Colonic mucosa (tissue), 4 donors: ENCODE measurements at regions of chr4 and their contacts with region 1.

Region 1: DNA sequence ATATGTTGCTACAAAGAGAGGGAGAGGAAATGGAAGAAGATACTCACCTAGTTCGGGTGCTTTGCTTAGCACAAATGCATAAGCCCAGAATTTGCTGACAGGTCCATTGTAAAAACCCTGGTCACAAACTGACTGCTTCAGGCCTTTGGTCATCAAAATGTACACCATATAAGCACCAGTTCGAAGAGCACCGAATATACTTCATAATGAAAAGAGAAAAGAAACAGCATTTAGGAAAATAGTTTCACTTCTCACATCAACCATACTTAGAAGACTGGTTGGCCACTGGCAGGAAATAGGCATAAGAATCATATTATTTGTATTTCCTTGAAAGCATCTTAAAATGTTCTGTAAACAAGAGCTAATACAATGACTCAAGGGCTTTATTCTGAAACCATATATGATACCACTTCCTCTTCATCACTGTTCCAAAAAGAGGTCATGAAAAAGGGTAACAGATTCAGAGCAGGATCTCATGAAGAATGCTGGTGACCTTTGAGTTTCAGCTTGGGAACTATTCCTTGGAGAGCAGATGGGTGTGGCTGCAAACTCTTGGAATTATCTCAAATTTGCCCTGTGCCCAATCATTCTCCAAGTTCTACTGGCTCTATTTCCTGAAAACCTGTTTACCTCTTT is 138.7 kb downstream of the ELOVL6 start:
- DNase-seq: peak; percentile 59
- H3K4me3 ChIP-seq: no peak overlapping the region
- H3K27ac ChIP-seq: peak overlapping the region; percentile 49
- H3K4me1 ChIP-seq: no peaks in the 10 kb centered on the region
- H3K27me3 ChIP-seq: no peaks in the 10 kb centered on the region
- CTCF ChIP-seq: no peak

Region 2: DNA sequence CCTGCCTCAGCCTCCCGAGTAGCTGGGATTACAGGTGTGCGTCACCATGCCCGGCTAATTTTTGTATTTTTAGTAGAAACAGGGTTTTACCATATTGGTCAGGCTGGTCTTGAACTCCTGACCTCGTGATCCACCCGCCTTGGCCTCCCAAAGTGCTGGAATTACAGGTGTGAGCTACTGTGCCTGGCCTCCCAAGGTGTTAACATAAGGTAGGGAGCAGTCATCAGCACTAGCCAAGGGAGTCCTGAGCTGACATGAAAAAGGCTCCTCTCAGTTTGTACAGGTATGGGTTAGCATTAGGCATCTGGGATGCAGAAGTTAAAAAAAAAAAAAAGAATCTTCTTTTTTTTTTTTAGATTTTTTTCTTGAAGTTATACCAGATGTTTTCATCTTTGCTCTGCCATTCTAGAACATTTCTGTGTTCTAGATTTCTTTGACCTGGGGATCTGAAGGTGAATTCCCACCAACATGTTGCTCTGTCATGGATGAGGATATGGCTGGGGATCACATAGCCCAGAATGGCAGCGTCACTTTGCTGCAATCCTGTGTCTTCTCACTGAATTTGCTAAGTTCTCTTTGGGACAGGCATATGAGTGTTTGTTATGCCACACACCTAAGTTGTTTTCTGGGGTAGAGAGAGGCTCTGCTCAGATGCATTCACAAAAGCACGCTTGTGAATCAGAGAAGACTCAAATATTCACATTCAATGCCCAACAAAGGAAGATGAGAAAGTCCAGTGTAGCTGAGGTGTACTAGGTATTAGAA is 305.4 kb before region 1 on chr4:
- intact Hi-C with region 1: no loop called
- DNase-seq: no peak
- H3K4me3 ChIP-seq: no peak overlapping the region
- H3K27ac ChIP-seq: no peak overlapping the region
- H3K4me1 ChIP-seq: no peaks in the 10 kb centered on the region
- H3K27me3 ChIP-seq: no peaks in the 10 kb centered on the region
- CTCF ChIP-seq: no peak

Region 3: DNA sequence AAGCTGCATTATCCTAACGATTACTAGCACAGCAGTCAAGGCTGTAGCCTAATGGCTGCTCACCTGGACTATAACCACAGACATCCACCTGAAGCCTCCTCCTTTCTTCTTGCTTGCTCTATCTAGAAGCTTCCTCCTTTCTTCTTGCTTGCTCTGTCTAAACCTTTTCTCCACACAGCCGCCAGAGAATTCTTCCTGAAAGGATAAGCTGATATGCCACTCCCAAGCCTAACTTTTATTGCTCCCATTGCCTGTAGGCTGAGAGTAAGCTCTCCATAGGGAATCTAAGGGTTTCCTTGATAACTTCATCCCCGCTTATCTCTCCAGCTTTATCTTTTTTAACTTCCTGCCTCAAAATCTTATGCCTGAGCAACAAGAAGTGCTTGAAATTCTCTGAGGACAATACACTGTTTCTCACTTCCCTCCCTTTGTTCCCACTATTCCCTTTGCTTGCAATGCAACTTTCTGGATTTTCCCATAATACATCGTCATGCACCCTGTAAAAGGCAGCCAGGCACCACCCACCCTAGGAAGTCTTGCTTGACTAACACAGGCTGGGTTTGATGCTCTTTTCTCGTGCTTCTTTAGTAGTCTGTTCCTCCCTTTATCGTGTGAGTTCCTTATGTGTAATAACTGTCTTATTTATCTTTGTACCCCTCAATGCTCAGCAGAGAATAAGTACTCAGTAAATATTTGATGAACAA is 213.1 kb before region 1 on chr4:
- intact Hi-C with region 1: no loop called
- DNase-seq: peak; percentile 48
- H3K4me3 ChIP-seq: no peak overlapping the region
- H3K27ac ChIP-seq: no peak overlapping the region
- H3K4me1 ChIP-seq: no peaks in the 10 kb centered on the region
- H3K27me3 ChIP-seq: no peaks in the 10 kb centered on the region
- CTCF ChIP-seq: no peak

Region 4: DNA sequence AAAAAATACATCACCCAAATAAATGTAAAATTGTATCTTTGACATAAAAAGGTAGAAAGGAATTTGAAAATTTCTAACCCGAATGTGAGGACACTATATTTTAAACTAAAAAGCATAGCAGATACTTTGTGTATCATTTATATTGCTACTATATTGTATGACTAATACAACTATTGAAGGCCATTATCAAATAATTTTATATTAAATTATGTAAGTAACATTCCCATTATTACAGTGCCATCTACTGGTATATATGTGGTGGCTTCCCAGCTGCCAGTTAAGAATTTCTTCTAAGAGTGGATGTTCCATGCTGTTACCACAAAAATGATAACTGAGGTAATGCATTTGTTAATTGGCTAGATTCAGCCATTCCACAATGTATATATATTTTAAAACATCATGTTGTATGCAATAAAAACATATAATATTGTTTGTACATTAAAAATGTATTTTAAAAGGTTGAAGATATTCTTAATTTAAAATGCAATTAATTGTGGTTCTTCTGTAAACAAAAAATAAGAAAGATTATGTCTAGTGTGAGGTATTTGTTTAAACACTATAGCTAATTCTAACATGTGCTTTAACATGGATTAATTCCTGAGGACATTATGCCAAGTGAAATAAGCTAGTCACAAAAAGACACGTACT is 81.7 kb before region 1 on chr4:
- intact Hi-C with region 1: no loop called
- DNase-seq: no peak
- H3K4me3 ChIP-seq: no peak overlapping the region
- H3K27ac ChIP-seq: no peak overlapping the region
- H3K4me1 ChIP-seq: no peaks in the 10 kb centered on the region
- H3K27me3 ChIP-seq: no peaks in the 10 kb centered on the region
- CTCF ChIP-seq: peak; percentile 56

Region 5: DNA sequence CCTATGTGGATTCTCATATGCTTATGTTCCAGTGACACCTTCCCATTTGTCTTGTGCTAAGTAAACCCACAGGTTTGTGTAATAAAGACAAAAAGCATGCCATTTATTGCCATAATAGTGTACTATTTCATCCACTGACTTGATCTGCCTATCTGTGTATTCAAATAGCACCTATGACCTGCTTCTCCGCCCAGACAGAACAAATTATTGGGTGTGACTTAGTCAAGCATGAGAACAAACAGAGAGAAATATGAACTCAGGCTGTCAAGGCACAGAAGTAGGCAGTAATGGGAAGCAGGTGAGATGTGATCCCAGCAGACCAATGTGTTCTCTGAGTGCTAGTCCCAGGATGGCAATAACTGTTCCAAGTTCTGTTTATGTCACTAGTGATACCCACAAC is 113.3 kb after region 1 on chr4:
- intact Hi-C with region 1: no loop called
- DNase-seq: peak; percentile 67
- H3K4me3 ChIP-seq: no peak overlapping the region
- H3K27ac ChIP-seq: peak overlapping the region; percentile 35
- H3K4me1 ChIP-seq: no peaks in the 10 kb centered on the region
- H3K27me3 ChIP-seq: no peaks in the 10 kb centered on the region
- CTCF ChIP-seq: no peak

Region 6: GRCh38 chr4:110201502-110201901 is 141.8 kb after region 1 on chr4:
- intact Hi-C with region 1: loop called (anchors 5 kb)
- DNase-seq: no peak
- H3K4me3 ChIP-seq: no peak overlapping the region
- H3K27ac ChIP-seq: no peak overlapping the region
- H3K4me1 ChIP-seq: no peaks in the 10 kb centered on the region
- H3K27me3 ChIP-seq: no peaks in the 10 kb centered on the region
- CTCF ChIP-seq: no peak